ENCODE measurements at regions of chr11 and their contacts with region 1.

Region 1: DNA sequence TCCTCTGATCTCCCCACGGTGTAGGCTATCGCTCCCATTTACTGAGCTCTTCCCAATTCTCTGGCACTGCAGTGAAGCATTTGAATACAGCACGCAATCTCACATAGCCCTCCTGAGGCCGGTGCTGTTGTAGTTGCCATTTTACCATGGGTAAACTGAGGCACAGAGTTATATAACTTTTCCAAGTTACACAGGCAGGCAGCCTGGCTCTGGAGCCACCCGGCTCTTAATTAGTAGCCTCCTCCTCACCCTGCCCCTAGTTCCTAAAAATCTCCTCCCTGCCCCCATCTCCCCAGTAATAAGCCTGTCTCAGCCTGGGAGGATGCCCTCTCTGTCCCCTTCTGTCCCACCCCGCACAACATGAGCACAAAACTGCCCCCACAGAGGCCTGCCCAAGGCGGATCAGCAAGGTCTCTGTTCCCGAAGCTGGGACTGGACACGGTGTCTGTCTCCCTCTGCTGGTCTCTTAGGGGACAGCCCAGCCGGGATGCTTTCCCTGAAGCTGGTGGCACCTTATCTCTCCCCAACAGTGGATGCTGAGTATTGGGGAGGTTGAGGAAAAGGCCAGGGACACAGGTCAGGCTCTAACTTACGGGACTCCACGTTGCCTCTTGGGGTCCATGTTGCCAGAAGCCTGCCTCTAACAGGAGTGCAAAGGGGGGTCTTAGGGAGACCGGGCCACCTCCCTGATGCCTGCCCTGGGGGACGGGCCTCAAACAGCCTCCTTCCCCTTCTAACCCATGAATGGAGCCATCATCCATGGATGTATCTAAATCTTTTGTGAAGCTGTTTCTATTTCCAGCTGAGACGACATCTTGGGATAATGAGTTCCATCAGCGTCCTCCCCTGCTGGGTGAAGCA is 9.1 kb upstream of the CLCF1 start:
- DNase-seq: peak; percentile 78 to 88
- H3K4me3 ChIP-seq: no peak overlapping the region
- H3K27ac ChIP-seq: no peak overlapping the region
- H3K4me1 ChIP-seq: peaks cover 0 to 10% (median 8%) of the 10 kb centered on the region in 4 donors
- H3K27me3 ChIP-seq: peaks cover 0 to 7% of the 10 kb centered on the region in 2 donors
- CTCF ChIP-seq: peak; percentile 98 to 99

Region 2: GRCh38 chr11:67347964-67348749 is 34.3 kb before region 1 on chr11:
- intact Hi-C with region 1: loop called (anchors 2 kb)
- DNase-seq: peak in 1 of 2 donors; percentile 7
- H3K4me3 ChIP-seq: no peak overlapping the region
- H3K27ac ChIP-seq: no peak overlapping the region
- H3K4me1 ChIP-seq: peaks cover 0 to 40% (median 23%) of the 10 kb centered on the region in 4 donors
- H3K27me3 ChIP-seq: no peaks in the 10 kb centered on the region
- CTCF ChIP-seq: no peak